Activated naive CD4-positive, alpha-beta T cell treated with anti-CD3 and anti-CD28 coated beads for 36 hours (primary cell): ENCODE measurements at regions of chr7 and their contacts with region 1.

Region 1: GRCh38 chr7:77188731-77189437 is 10.7 kb downstream of the FGL2 start:
- DNase-seq: no peak
- H3K4me3 Mint-ChIP-seq: no peak overlapping the region
- H3K27ac Mint-ChIP-seq: no peak overlapping the region
- H3K4me1 Mint-ChIP-seq: peaks cover 11% of the 10 kb centered on the region
- H3K27me3 Mint-ChIP-seq: no peaks in the 10 kb centered on the region

Region 2: GRCh38 chr7:77266291-77266794 is 77.5 kb after region 1 on chr7:
- CTCF ChIA-PET with region 1: no interaction called
- intact Hi-C with region 1: loop called (anchors 1 kb)
- DNase-seq: peak; percentile 49
- H3K4me3 Mint-ChIP-seq: no peak overlapping the region
- H3K27ac Mint-ChIP-seq: peak overlapping the region; percentile 50
- H3K4me1 Mint-ChIP-seq: peaks cover 13% of the 10 kb centered on the region
- H3K27me3 Mint-ChIP-seq: no peaks in the 10 kb centered on the region

Region 3: DNA sequence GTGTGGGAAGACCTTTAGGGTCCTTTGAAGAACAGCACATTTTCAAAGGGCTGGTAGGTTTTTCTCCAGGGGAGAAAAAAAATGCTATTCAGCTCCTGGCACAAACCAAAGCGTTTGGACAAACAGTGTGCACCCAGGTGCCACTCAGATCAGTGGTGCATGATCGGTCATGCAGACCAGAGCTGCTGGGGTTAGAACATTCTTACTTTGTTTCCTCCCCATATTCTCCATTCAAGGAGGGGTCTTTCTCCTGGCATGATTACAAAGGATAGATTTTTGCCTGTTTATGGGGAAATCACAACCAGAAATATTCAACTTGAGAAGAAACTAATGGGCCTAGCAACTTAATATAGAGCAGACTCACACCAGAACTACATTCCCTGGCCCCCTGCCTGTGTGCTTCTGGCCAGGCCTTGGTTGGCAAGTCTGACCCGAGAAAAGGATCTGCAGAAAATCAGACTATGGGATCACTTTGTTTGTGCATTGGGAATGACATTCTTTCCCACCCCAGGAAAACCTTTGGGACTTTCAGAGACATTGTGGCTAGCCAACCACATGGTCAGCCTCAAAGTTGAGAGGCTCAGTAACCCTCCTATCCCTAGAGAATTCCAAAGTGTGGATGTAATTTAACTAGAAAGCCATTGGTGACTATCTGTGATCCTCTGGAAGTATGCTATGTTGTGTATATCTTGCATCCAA is 93.0 kb after region 1 on chr7:
- CTCF ChIA-PET with region 1: no interaction called
- intact Hi-C with region 1: no loop called
- DNase-seq: no peak
- H3K4me3 Mint-ChIP-seq: no peak overlapping the region
- H3K27ac Mint-ChIP-seq: no peak overlapping the region
- H3K4me1 Mint-ChIP-seq: no peaks in the 10 kb centered on the region
- H3K27me3 Mint-ChIP-seq: no peaks in the 10 kb centered on the region

Region 4: GRCh38 chr7:77326696-77327628 is 138.1 kb after region 1 on chr7:
- CTCF ChIA-PET with region 1: interaction called, 4 read pairs
- intact Hi-C with region 1: loop called (anchors 2 kb)
- DNase-seq: no peak
- H3K4me3 Mint-ChIP-seq: no peak overlapping the region
- H3K27ac Mint-ChIP-seq: no peak overlapping the region
- H3K4me1 Mint-ChIP-seq: peaks cover 54% of the 10 kb centered on the region
- H3K27me3 Mint-ChIP-seq: no peaks in the 10 kb centered on the region